Prostate gland (tissue), 2 donors: ENCODE measurements at regions of chr5 and their contacts with region 1.

Region 1: GRCh38 chr5:132293066-132293991 is 865 bp upstream of the SLC22A4 start:
- DNase-seq: peak; percentile 70
- H3K4me3 ChIP-seq: peak overlapping the region; percentile 50 to 57
- H3K27ac ChIP-seq: peak overlapping the region; percentile 97
- H3K4me1 ChIP-seq: peaks cover 6% of the 10 kb centered on the region
- H3K27me3 ChIP-seq: no peaks in the 10 kb centered on the region
- CTCF ChIP-seq: peak in 3 of 4 experiments; percentile 26 to 32 (median 28)
- POLR2A ChIP-seq: peak; percentile 55

Region 2: GRCh38 chr5:132227485-132228240 is 65.7 kb before region 1 on chr5 and contains the start of gene P4HA2:
- intact Hi-C with region 1: loop called (anchors 5 kb)
- DNase-seq: peak; percentile 85
- H3K4me3 ChIP-seq: peak within 1 kb of the TSS; percentile 70 to 81
- H3K27ac ChIP-seq: peak within 1 kb of the TSS; percentile 84 to 88
- H3K4me1 ChIP-seq: peaks cover 7% of the 10 kb centered on the region
- H3K27me3 ChIP-seq: no peaks in the 10 kb centered on the region
- CTCF ChIP-seq: no peak
- POLR2A ChIP-seq: peak; percentile 90
- total RNA-seq, gene P4HA2: 16.8 to 18.0 TPM

Region 3: DNA sequence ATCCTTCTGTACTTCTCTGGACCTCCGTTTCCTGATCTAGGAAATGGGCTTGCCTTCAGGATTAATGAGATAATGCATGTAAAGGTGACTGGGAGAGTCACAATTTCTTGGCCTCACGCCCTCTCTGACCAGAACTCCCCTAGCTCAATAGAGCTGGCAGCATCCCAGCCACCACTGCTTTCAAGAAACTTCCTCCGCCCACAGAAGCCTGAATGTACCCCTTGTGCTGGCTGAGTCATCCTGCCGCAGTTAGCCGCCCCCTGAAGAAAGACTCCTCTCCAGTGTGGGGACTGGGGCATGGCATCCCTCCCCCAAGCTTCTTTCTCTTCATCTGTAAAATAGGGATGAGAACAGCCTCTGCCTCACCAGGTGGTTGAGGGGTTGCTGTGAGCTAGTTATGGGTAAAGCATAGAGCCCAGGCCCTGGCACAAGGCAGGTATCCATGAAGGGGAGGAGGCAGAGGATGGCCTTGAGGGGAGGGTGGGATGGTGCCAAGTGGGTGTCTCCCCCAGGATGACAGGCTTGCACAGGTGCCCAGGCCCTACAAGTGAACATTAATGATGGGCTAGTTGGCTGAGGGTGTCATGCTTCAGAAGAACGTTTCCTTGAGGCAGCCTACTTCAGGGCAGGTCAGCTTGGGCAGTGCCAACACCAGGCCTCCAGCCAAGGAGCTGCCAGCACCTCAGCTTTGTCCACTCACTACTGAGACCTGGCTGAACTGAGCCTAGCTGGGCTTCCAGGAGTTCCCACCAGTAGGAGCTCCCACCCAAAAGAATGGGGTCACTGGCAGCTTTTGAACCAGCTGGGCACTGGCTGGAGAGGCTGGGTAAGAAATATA is 32.4 kb before region 1 on chr5:
- intact Hi-C with region 1: loop called (anchors 1 kb)
- DNase-seq: no peak
- H3K4me3 ChIP-seq: no peak overlapping the region
- H3K27ac ChIP-seq: peak overlapping the region; percentile 88 to 91
- H3K4me1 ChIP-seq: peaks cover 23% of the 10 kb centered on the region
- H3K27me3 ChIP-seq: no peaks in the 10 kb centered on the region
- CTCF ChIP-seq: no peak
- POLR2A ChIP-seq: no peak

Region 4: GRCh38 chr5:132334812-132335211 is 41.5 kb after region 1 on chr5:
- intact Hi-C with region 1: no loop called
- DNase-seq: no peak
- H3K4me3 ChIP-seq: no peak overlapping the region
- H3K27ac ChIP-seq: no peak overlapping the region
- H3K4me1 ChIP-seq: no peaks in the 10 kb centered on the region
- H3K27me3 ChIP-seq: no peaks in the 10 kb centered on the region
- CTCF ChIP-seq: no peak
- POLR2A ChIP-seq: no peak

Region 5: DNA sequence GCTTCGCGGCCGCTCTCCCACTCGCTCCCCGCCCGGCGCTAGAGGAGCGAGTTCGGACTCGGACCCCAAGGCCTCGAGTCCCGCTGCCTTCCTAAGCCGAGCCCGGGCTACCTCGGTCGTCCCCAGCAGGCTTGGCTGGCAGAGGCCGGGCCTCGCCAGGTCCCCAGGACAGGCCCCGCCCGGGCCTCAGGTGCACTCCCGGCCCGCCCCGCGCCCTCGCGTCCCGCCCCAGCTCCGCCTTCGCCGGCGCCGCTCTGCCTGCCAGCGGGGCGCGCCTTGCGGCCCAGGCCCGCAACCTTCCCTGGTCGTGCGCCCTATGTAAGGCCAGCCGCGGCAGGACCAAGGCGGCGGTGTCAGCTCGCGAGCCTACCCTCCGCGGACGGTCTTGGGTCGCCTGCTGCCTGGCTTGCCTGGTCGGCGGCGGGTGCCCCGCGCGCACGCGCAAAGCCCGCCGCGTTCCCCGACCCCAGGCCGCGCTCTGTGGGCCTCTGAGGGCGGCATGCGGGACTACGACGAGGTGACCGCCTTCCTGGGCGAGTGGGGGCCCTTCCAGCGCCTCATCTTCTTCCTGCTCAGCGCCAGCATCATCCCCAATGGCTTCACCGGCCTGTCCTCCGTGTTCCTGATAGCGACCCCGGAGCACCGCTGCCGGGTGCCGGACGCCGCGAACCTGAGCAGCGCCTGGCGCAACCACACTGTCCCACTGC is 76.3 kb after region 1 on chr5 and contains the start of gene SLC22A5:
- intact Hi-C with region 1: loop called (anchors 5 kb)
- DNase-seq: peak; percentile 70
- H3K4me3 ChIP-seq: peak within 1 kb of the TSS; percentile 70 to 74
- H3K27ac ChIP-seq: peak within 1 kb of the TSS; percentile 92 to 95
- H3K4me1 ChIP-seq: no peaks in the 10 kb centered on the region
- H3K27me3 ChIP-seq: no peaks in the 10 kb centered on the region
- CTCF ChIP-seq: peak in 1 of 4 experiments; percentile 13
- POLR2A ChIP-seq: peak; percentile 79
- total RNA-seq, gene SLC22A5: 26.2 to 37.5 TPM